ENCODE measurements at regions of chr4 and their contacts with region 1.

Region 1: GRCh38 chr4:76511947-76512346 is 76.9 kb downstream of the SHROOM3 start:
- DNase-seq: no peak
- CTCF ChIP-seq: no peak

Region 2: DNA sequence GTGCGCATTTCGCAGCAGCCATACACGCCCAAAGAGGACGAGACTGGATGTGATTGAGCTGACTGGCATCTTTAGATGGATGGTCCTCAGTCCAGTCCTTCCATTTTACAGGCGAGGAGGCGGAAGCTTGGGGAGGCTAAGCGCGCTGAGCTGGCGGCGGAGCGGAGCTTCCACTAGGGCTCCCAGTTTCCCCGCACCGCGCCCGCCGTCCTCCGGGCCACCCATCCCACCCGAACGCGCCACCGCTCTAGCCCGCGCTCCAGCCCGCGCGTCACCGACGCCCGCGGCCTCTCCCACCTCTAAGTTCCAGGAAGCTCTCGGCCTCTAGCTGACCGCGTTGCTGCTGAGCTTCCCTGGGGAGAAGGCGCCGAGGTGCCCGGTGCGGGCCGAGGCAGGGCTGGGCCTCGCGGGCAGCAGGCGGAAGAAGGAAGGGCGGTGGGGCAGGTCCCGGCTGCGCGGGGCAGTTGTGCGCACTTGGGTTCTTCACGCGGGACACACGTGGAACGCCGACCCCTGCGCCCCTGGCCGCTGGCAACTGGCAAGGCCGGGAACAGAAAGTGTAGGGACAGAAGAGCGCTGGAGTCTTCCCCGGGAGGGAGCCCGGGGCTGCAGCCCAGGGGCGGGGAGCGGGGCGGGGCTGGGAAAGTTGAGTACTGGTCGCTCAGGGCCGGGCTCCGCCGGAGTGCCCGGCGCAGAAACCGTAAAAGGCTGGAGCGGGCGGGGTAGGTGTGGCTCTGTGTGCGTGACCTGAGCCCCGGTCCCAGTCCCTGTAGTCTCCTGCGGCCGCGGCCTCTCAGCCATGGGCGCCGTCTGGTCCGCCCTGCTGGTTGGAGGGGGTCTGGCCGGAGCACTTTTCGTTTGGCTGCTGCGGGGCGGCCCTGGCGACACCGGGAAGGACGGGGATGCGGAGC is 205.7 kb before region 1 on chr4 and contains the start of gene STBD1:
- in situ Hi-C with region 1: no loop called
- DNase-seq: peak; percentile 56
- CTCF ChIP-seq: no peak

Region 3: DNA sequence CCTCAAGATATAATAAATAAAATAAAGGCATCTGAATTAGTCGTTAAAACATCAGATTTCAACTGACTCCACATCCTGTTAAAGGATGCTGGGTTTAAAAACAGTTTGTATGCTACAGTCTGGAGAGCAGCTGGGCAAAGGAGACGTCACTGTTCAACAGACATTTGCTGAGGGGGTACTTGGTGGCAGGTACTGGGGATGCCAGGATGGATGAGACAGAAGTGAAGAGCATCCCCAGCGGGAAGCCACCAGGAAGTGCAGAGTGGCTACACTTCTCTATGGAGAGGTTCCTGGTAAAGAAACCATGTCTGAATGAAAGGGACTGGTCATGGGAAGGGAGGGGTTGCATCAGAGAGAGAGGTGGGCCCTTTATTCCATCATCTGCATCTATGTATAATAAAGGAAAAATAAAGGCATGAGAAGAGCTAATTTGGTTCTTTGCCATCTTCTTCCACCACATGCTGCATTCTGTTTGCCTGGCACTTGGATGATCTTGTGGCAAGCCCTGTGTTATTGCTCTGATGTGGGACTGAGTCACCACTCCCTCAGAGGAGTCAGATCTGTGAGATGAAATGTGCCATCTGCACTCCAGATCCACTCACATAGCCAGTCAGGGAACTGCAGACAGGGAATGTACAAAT is 241.0 kb after region 1 on chr4:
- in situ Hi-C with region 1: loop called (anchors 5 kb)
- DNase-seq: no peak
- CTCF ChIP-seq: no peak

Measured in GM13976 (cell line).